ENCODE measurements at regions of chr6 and their contacts with region 1.

Region 1: GRCh38 chr6:41735427-41736356 is at the start of gene TFEB:
- DNase-seq: peak; percentile 96
- CTCF ChIP-seq: peak; percentile 97

Region 2: DNA sequence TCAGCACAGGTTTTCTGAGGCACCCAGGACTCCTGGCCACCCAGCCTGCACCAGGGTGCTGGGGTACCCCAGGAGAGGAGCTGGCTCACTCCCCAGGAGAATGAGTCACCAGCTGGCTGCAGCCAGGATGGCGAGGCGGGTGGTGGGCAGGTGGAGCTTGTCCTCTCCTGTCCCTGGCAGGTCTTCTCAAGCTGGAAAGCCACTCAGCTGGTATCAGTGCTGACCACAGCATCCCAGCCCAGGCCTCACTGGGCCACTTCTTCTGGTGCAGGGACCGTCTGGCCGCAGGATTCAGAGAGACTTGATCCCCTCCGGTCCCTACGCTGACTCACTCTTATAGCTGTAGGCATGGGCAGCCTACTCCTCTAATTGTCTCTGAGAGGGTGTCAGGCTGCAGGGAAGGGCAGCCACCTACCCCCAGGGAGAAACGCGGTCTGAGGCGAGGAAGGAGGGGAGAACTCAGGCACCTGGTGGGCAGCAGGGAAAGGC is 22.5 kb before region 1 on chr6:
- CTCF ChIA-PET with region 1: interaction called, 264 read pairs
- POLR2A ChIA-PET with region 1: interaction called, 39 read pairs
- DNase-seq: no peak
- CTCF ChIP-seq: no peak

Region 3: DNA sequence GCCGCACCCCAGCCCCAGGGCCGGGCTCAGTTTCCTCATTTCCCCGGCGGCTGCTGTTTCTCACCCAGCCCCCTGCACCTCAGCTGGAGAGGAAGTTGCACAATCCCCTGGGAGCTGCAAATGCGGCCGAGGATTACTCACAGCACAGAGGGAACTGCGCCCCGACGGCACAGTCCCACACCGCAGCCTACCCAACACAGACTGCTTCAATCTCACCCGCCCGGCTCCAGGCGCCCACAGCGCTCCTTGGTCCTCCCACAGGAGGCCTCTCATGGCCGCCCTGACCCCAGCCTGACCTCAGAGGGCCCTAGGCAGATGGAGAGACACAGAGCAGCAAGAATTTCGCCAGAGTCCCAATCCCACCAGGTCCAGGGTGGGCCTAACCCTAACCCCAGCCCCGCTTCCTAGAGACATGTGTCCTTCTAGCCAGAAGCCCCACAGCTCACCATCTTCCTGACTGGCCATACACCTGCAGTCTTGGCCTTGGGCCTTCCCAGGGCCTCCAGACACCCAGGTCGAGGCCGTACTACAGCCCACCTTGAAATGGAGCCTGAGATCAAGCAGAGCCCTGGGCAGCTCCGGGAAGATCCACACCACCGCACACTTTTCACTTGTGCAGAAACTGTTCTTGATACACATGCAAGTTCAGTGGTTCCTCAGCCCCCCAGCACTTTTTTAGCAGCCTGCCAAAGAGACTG is 12.0 kb before region 1 on chr6:
- CTCF ChIA-PET with region 1: interaction called, 28 read pairs
- POLR2A ChIA-PET with region 1: interaction called, 39 read pairs
- DNase-seq: peak; percentile 89
- CTCF ChIP-seq: no peak

Region 4: GRCh38 chr6:41780546-41781427 is 45.1 kb after region 1 on chr6 and contains the start of gene PRICKLE4:
- CTCF ChIA-PET with region 1: interaction called, 22 read pairs
- POLR2A ChIA-PET with region 1: no interaction called
- DNase-seq: no peak
- CTCF ChIP-seq: no peak

Measured in GM10248 (cell line).